Mammary epithelial cell (primary cell): ENCODE measurements at regions of chr7 and their contacts with region 1.

Region 1: GRCh38 chr7:12623897-12624498 is 53.5 kb downstream of the SCIN start:
- DNase-seq: peak; percentile 17
- H3K4me3 ChIP-seq: no peak overlapping the region
- H3K27ac ChIP-seq: no peak overlapping the region
- H3K4me1 ChIP-seq: no peaks in the 10 kb centered on the region
- H3K27me3 ChIP-seq: no peaks in the 10 kb centered on the region
- CTCF ChIP-seq: peak; percentile 82 to 86

Region 2: GRCh38 chr7:12524794-12525386 is 99.1 kb before region 1 on chr7:
- CTCF ChIA-PET with region 1: interaction called, 4 read pairs
- dilution Hi-C with region 1: no loop called
- in situ Hi-C with region 1: loop called (anchors 5 to 10 kb)
- intact Hi-C with region 1: loop called (anchors 1 kb)
- DNase-seq: peak; percentile 28
- H3K4me3 ChIP-seq: no peak overlapping the region
- H3K27ac ChIP-seq: no peak overlapping the region
- H3K4me1 ChIP-seq: no peaks in the 10 kb centered on the region
- H3K27me3 ChIP-seq: no peaks in the 10 kb centered on the region
- CTCF ChIP-seq: peak; percentile 43 to 47

Region 3: GRCh38 chr7:12567015-12567414 is 57.0 kb before region 1 on chr7:
- CTCF ChIA-PET with region 1: no interaction called
- dilution Hi-C with region 1: no loop called
- in situ Hi-C with region 1: no loop called
- intact Hi-C with region 1: loop called (anchors 10 kb)
- DNase-seq: no peak
- H3K4me3 ChIP-seq: no peak overlapping the region
- H3K27ac ChIP-seq: no peak overlapping the region
- H3K4me1 ChIP-seq: peaks cover 11% of the 10 kb centered on the region
- H3K27me3 ChIP-seq: peaks cover 7% of the 10 kb centered on the region
- CTCF ChIP-seq: no peak

Region 4: DNA sequence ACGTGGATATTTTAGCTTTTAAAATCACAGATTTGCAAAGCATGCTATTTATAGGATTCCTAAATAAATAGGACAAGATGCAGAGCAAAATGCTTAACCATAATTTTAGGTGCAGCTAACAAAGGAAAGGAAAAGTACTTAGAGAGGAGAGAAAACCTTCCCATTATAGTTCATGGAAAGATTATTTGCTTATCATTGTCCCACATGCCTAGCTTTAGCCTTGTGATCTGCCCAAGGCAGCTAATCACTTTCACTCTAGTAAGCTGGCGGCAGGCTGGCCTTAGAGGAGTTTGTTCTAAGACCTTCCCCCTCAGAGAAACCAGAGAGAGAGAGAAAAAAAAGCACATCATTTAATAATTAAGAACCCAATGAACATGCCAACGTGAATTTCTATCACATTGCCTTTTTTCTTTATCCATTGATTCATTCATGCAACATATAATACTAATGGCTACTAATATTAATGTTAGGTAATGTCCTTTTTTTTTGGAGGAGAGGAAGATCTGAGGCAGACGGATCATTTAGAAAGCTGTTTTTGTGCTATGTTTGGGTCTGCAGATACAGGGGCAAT is 338.0 kb after region 1 on chr7:
- CTCF ChIA-PET with region 1: no interaction called
- dilution Hi-C with region 1: no loop called
- in situ Hi-C with region 1: no loop called
- intact Hi-C with region 1: no loop called
- DNase-seq: no peak
- H3K4me3 ChIP-seq: no peak overlapping the region
- H3K27ac ChIP-seq: no peak overlapping the region
- H3K4me1 ChIP-seq: peaks cover 8% of the 10 kb centered on the region
- H3K27me3 ChIP-seq: no peaks in the 10 kb centered on the region
- CTCF ChIP-seq: no peak

Region 5: DNA sequence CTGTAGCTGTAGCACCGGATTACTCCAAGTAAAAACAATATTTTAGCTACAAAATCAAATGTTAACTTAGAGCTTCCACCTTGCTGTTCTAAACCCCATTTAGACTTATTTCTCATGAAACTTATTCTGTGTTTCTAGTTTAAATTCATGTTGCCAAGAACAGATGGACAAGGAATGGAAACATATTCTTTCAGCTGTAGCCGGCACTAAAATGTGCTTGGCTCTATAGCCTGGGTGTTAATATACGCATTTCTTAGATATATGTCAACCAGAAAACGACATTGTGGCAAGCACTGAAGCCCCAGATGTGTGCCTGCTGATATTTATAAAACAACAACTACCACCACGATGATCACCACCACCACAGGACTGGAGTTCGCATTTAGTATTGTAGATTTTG is 1555.8 kb after region 1 on chr7:
- CTCF ChIA-PET with region 1: no interaction called
- dilution Hi-C with region 1: no loop called
- in situ Hi-C with region 1: no loop called
- intact Hi-C with region 1: no loop called
- DNase-seq: no peak
- H3K4me3 ChIP-seq: no peak overlapping the region
- H3K27ac ChIP-seq: no peak overlapping the region
- H3K4me1 ChIP-seq: no peaks in the 10 kb centered on the region
- H3K27me3 ChIP-seq: peaks cover 4% of the 10 kb centered on the region
- CTCF ChIP-seq: no peak